ENCODE measurements at regions of chr1 and their contacts with region 1.

Region 1: DNA sequence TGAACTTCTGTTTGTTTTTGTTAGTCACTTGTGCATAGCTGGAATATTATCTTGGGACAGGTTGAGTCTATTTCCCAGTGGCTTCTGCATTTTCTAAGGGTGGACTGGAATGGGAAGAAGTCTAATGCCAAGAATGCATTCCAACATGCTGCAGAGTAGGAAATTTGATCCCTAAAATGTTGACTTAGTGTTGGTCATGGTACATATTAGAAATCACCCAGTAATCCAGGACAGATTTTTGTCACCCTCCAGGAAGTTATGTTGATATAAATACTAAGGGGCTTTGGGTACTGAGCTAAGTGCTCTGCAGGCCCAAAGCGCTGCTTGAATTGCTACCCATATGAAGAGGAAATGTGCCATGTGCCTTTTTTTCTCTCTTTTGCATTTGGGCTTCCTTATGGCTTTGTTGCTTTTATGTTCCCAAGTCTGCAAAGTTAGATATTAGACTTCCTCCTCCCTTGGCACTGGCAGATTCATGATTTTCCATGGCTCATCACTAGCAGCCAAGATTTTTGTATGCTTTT is 10.0 kb downstream of the ARID1A start:
- DNase-seq: peak; percentile 40 to 94
- H3K4me3 ChIP-seq: peak overlapping the region; percentile 6; the same call in 1 of the 2 replicates
- H3K27ac ChIP-seq: peak overlapping the region; percentile 90
- H3K4me1 ChIP-seq: peaks cover 69% of the 10 kb centered on the region
- H3K27me3 ChIP-seq: no peaks in the 10 kb centered on the region
- CTCF ChIP-seq: no peak

Region 2: GRCh38 chr1:26689504-26689903 is 16.3 kb before region 1 on chr1:
- CTCF ChIA-PET with region 1: interaction called, 19 read pairs
- POLR2A ChIA-PET with region 1: interaction called, 8 read pairs
- intact Hi-C with region 1: no loop called
- DNase-seq: no peak
- H3K4me3 ChIP-seq: no peak overlapping the region
- H3K27ac ChIP-seq: no peak overlapping the region
- H3K4me1 ChIP-seq: peaks cover 20% of the 10 kb centered on the region
- H3K27me3 ChIP-seq: no peaks in the 10 kb centered on the region
- CTCF ChIP-seq: no peak

Region 3: DNA sequence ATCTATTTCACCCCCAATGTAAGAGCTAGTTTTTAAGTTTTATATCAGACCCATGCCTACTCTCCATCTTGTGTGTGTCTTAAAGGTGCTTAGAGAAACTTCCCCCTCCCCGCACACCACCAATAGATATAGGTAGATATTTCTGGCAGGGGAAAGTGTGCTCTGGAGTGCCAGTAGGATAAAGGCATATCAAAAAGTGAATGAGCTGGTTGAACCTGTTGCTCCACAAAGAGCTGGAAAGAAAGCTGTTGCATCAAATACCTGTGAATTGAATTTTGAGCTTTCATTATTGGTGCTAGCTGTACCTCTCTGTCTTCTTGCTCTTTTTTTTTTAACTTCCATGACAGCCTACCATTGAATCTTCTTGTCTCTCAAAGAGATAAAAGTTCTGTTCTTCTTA is 22.8 kb after region 1 on chr1:
- CTCF ChIA-PET with region 1: no interaction called
- POLR2A ChIA-PET with region 1: interaction called, 4 read pairs
- intact Hi-C with region 1: loop called (anchors 2 kb)
- DNase-seq: peak; percentile 26 to 82
- H3K4me3 ChIP-seq: peak overlapping the region; percentile 29; the same call in 1 of the 2 replicates
- H3K27ac ChIP-seq: peak overlapping the region; percentile 61
- H3K4me1 ChIP-seq: peaks cover 82% of the 10 kb centered on the region
- H3K27me3 ChIP-seq: no peaks in the 10 kb centered on the region
- CTCF ChIP-seq: no peak

Measured in PC-9 (cell line).